ENCODE measurements at regions of chr10 and their contacts with region 1.

Region 1: DNA sequence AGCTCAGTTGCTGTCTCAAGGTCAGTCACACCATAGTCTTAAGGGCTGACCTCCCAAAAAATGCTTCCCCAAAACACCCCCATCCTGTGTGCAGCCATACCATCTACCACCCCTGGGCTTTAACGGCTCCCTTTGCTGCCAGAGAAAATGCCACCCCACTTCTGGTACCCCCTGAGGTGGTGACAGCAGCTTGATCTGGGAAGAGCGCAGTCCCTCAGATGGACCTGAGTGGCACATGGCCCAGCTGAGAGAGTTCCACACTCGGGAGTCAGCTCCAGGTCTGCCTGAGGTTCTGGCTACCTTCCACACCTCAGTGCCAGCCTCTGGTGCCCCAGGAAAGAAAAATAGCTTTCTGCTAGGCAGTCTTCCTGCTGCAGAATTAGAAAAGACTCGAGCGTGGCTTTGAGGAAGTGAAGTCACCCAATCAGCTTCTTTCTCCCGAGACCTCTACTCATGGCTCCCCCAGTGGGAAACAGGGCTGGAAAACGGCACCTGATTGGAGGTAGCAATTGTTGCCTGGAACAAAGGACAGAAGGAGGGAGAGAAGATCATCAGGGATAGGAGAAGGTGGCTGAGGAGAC is 151.7 kb downstream of the ARHGAP21 start:
- DNase-seq: no peak
- CTCF ChIP-seq: no peak

Region 2: DNA sequence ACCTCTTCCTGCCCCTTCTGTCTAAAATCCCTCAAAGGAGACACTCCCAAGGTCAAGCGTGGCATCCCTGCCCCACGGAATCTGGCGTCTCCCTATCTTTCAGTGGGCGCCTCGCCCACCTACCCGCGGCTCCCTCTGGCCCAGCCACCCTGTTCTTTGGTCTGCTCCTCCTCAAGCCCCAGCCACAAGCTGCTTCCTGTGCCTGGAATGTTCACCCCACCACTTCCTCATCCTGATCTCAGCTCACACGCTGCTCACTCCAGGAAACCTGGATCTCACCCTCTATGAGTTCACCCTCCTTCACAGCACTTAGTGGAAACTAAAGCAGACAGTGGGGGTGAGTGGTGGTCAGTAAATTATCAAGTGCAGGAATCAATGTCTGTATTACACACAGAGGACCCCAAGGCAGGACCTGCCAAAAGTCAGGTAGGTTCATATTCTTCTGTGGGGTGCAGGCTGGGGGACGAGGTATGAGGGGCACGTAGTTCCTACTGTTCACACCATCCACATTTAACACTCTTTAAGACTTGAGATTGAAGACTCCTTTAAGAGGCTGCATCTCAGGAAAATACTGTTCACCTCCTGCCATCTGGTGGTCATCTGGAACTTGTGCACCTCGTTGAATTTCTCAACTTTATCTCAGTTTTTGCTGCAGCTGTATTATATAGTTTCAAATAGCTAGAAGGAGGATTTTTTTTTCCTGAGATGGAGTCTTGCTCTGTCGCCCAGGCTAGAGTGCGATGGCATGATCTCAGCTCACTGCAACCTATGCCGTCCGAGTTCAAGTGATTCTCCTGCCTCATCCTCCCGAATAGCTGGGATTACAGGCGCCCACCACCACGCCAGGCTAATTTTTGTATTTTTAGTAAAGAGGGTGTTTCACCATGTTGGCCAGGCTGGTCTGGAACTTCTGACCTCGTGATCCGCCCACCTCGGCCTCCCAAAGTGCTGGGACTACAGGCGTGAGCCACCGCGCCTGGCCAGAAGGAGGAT is 14.9 kb before region 1 on chr10:
- CTCF ChIA-PET with region 1: interaction called, 11 read pairs
- POLR2A ChIA-PET with region 1: no interaction called
- DNase-seq: peak; percentile 68
- CTCF ChIP-seq: peak; percentile 73